AG04449 (cell line): ENCODE measurements at regions of chr11 and their contacts with region 1.

Region 1: DNA sequence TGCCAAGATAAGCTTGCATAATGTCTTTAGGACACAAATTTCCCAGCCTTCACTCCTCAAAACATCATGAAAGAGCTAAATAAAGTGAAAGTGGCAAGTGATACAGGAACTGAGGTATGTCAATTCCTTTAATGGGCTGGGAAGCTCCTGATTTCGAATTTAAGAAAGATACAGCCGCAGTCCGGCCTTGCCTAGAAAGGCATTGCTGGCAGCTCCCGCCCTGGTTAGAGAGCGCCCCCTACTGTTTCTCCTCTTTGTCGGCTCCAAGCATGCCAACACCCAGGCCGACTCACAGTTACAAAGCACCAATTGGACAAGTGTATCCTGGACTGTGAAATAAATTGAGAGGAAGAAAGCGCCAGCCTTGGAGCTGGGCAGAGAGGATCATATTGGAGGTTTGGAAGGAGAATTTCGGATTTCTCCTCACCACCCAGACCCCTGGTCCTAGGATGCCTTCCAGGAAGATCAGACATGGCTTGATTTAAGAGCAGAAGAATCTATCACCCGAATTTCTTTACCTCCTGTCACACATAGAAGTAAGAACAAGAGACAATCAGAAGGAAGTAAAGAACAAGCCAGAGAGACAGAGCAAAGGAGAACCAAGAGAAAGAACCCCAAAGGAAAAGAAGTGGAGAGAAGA is 84.0 kb downstream of the FAM76B start:
- DNase-seq: peak; percentile 49
- H3K4me3 ChIP-seq: no peak overlapping the region
- CTCF ChIP-seq: peak; percentile 90

Region 2: DNA sequence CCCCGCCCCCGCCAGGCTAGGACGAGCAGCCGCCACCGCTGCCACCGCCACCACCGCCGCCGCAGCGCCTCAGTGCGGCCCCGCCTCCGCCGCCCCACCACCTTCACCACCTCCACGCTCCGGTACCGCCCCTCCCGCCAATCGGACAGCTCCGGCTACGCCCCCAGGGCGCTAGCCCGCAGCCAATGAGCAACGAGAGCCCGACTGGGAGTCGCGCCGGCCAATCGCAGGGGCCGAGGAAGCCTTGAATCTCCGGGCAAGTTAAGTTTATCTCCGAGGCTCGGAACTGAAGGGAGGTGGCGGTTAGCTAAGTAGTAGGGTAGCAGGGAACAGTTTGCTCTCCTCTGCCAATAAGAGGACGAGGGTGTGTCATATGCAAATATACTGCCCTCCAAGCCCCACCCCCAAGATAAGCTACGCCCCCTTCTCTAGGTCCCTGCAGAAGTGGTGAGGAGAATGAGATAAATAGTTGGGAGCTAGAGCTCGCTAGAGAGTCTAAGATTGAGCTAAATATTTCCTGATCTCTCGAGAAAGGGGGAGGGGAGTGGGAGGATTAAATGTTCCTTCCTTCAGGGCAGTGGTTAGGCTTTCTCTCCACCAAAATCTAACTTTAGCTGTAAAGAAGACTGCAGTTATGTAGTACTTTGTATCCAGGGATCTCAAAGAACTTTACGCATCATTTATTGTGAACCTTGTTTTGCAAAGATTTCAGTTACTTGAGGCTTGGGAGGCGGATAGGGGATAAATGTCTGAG is 474.3 kb before region 1 on chr11 and contains the start of gene SESN3:
- CTCF ChIA-PET with region 1: interaction called, 31 read pairs
- POLR2A ChIA-PET with region 1: interaction called, 5 read pairs
- DNase-seq: peak; percentile 97
- H3K4me3 ChIP-seq: peak within 1 kb of the TSS; percentile 66
- CTCF ChIP-seq: no peak

Region 3: DNA sequence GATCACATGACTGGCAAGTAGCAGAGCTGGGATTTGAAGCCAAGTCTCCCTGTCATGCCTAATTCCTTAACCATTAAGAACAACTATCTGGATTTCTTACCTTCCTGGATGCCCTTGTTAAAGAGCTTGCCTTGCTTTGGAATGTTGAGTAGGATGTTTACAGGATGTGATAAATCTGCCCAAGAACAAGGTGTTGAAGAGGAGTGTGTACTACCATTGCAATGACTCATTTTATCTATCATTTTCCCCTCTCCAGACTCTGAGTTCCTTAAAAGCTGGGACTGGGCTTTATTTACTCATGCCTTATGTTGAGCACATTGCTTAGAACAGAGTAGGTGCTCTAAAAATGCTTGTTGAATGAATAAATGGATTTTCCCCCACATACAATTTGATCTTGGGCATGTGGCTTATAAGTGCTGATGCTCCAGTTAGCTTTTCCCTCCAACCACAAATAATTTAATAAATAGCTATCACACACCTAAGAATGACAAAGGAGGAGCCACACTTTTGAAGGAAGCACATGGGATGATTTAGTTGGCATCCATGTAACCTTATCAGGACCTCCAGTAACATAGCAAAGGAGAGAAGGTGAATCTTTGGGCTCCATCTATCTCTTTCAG is 206.0 kb before region 1 on chr11:
- CTCF ChIA-PET with region 1: interaction called, 15 read pairs
- POLR2A ChIA-PET with region 1: no interaction called
- DNase-seq: peak; percentile 51
- H3K4me3 ChIP-seq: no peak overlapping the region
- CTCF ChIP-seq: no peak

Region 4: GRCh38 chr11:95563173-95563572 is 142.4 kb before region 1 on chr11:
- CTCF ChIA-PET with region 1: interaction called, 14 read pairs
- POLR2A ChIA-PET with region 1: no interaction called
- DNase-seq: no peak
- H3K4me3 ChIP-seq: no peak overlapping the region
- CTCF ChIP-seq: no peak

Region 5: DNA sequence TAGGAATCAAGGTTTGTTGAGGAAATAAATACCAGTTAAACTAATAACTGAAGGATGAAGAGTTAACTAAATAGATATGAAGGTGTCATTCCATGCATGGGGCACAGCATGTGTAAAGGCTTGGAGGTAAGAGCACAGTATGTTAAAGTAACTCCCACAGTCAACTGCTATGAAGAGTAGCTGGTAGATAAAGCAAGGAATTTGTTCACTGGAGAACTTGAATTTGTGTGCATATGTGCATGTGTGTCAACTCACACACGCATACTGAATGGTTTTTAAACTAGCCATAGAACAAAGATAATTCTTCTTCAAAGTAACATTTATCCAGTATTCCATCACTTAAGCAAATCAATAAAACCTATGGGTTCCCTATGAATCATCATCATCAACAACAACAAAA is 51.9 kb before region 1 on chr11:
- CTCF ChIA-PET with region 1: no interaction called
- POLR2A ChIA-PET with region 1: no interaction called
- DNase-seq: no peak
- H3K4me3 ChIP-seq: no peak overlapping the region
- CTCF ChIP-seq: no peak

Region 6: GRCh38 chr11:95725196-95725595 is 19.6 kb after region 1 on chr11:
- CTCF ChIA-PET with region 1: interaction called, 21 read pairs
- POLR2A ChIA-PET with region 1: no interaction called
- DNase-seq: no peak
- H3K4me3 ChIP-seq: no peak overlapping the region
- CTCF ChIP-seq: no peak

Region 7: GRCh38 chr11:95739108-95739938 is 33.7 kb after region 1 on chr11:
- CTCF ChIA-PET with region 1: interaction called, 21 read pairs
- POLR2A ChIA-PET with region 1: interaction called, 3 read pairs
- DNase-seq: no peak
- H3K4me3 ChIP-seq: no peak overlapping the region
- CTCF ChIP-seq: no peak

Region 8: DNA sequence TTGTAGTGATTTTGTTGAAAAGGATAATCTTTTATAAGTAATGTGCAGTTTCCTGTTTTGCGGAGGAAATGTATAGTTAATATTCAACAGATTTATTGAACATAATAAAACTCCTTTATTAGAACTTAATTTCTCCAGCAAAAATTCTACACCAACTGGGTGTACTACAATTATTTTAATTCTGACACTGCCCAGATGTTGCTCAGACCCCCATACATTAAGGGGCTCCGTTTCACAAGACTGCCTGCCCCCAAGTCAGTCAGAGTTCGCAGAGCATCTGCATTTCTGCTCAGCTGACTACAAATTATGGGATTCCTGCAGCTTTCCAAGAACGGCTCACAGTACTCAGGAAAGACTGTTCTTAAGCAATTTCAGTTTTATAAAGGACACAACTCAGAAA is 90.9 kb after region 1 on chr11:
- CTCF ChIA-PET with region 1: no interaction called
- POLR2A ChIA-PET with region 1: no interaction called
- DNase-seq: no peak
- H3K4me3 ChIP-seq: no peak overlapping the region
- CTCF ChIP-seq: no peak

Region 9: DNA sequence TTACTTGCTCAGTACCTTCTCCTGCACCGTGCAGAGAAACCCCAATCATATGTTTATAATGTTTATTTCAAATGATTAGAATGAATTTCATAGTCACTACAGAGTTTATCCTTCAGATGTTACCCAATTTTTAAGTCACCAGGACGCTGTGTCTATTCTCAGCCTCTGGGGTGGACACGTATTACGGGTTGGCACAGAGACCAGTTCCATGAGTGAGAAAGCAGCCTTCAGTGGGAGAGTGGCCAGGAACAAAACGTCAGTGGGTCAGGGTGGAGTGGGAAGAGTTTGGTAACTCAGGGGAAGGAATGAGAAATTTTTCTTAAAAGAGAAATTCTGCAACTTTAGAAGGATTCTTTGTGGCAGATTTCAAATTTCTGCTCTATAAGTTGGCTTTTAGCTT is 295.4 kb after region 1 on chr11:
- CTCF ChIA-PET with region 1: no interaction called
- POLR2A ChIA-PET with region 1: no interaction called
- DNase-seq: no peak
- H3K4me3 ChIP-seq: no peak overlapping the region
- CTCF ChIP-seq: no peak

Region 10: GRCh38 chr11:96091476-96091875 is 385.9 kb after region 1 on chr11:
- CTCF ChIA-PET with region 1: no interaction called
- POLR2A ChIA-PET with region 1: no interaction called
- DNase-seq: no peak
- H3K4me3 ChIP-seq: no peak overlapping the region
- CTCF ChIP-seq: no peak